H1 (cell line): ENCODE measurements at regions of chr22 and their contacts with region 1.

Region 1: GRCh38 chr22:36901411-36902142 is 11.9 kb upstream of the CSF2RB start:
- DNase-seq: no peak
- H3K4me3 ChIP-seq: no peak overlapping the region
- H3K27ac ChIP-seq: 0 out of 2 replicates have a peak overlapping the region, but pooled peaks have one; percentile 6
- H3K4me1 ChIP-seq: peaks cover 11 to 17% (median 13%) of the 10 kb centered on the region in 4 experiments
- H3K27me3 ChIP-seq: peaks cover 0 to 6% (median 2%) of the 10 kb centered on the region in 4 experiments; a peak in 2 of 7 replicates
- CTCF ChIP-seq: no peak
- EP300 ChIP-seq: no peak
- POLR2A ChIP-seq: no peak
- RAD21 ChIP-seq: no peak

Region 2: DNA sequence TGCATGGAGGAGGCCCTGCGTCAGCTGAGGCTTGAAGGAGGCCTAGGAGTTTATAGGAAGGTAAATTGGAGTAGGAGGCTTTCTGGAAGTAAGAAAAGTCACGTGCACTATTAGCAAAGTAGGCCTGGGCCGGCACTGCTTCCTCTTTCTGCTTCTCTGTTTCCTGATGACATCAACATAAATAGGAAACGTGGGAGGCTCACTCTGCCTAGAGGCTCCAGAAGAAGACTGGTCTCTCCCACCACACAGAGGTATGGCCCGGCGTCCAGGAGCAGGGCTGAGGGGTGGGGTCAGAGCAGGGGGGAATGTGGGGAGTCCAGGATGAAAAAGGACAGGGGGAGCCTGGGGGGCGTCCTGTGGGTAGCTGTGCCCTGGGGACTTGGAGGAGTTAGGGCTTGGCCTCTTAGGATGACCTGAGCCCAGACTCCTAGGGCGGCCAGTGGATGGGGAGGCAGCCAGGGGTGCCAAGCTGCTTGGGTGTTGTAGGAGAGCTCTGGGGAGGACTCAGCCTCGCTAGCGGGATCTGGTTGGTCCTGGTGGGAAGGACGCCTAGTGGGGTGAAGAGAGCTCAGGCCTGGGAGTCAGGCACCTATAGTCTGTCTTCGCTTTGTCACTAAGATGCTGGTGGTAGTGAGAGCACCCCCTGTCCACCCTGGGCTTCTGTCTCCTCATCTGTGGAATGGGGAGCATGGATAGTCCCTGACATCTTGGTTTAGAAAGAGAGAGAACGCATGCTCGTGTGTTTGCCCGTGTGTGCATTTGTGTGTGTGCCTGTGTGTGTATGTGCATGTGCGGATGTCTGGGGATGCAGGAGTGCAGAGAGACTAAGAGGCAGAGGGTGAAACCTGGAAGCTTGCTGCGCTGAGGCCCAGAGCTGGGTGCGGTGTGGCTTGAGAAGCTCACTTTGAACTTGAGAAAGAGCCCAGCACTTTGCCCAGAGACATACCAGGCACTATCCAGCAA is 12.1 kb after region 1 on chr22 and contains the start of gene CSF2RB:
- CTCF ChIA-PET with region 1: interaction called, 7 read pairs
- POLR2A ChIA-PET with region 1: interaction called, 28 read pairs
- DNase-seq: no peak
- H3K4me3 ChIP-seq: peak within 1 kb of the TSS in 1 of 4 experiments; percentile 32; a peak in 3 of 8 replicates
- H3K27ac ChIP-seq: no peak within 1 kb of the TSS
- H3K4me1 ChIP-seq: peaks cover 4 to 13% (median 8%) of the 10 kb centered on the region in 4 experiments
- H3K27me3 ChIP-seq: peaks cover 10 to 45% (median 29%) of the 10 kb centered on the region in 4 experiments
- CTCF ChIP-seq: no peak
- EP300 ChIP-seq: no peak
- POLR2A ChIP-seq: no peak
- RAD21 ChIP-seq: no peak
- total RNA-seq, gene CSF2RB: not detected in 2 replicates